OCI-LY7 (cell line): ENCODE measurements at regions of chr16 and their contacts with region 1.

Region 1: GRCh38 chr16:84593825-84594724 is 23.8 kb downstream of the COTL1 start:
- DNase-seq: peak; percentile 97
- H3K4me3 ChIP-seq: peak overlapping the region; percentile 71
- H3K27ac ChIP-seq: peak overlapping the region; percentile 97
- H3K4me1 ChIP-seq: peaks cover 69% of the 10 kb centered on the region
- CTCF ChIP-seq: no peak

Region 2: GRCh38 chr16:84511180-84511824 is 82.8 kb before region 1 on chr16:
- CTCF ChIA-PET with region 1: interaction called, 3 read pairs
- POLR2A ChIA-PET with region 1: interaction called, 26 read pairs
- intact Hi-C with region 1: loop called (anchors 1 kb)
- DNase-seq: peak; percentile 86
- H3K4me3 ChIP-seq: peak overlapping the region; percentile 50
- H3K27ac ChIP-seq: no peak overlapping the region
- H3K4me1 ChIP-seq: peaks cover 59% of the 10 kb centered on the region
- CTCF ChIP-seq: peak; percentile 98

Region 3: GRCh38 chr16:84836234-84836647 is 242.2 kb after region 1 on chr16:
- CTCF ChIA-PET with region 1: no interaction called
- POLR2A ChIA-PET with region 1: no interaction called
- intact Hi-C with region 1: no loop called
- DNase-seq: no peak
- H3K4me3 ChIP-seq: no peak overlapping the region
- H3K27ac ChIP-seq: no peak overlapping the region
- H3K4me1 ChIP-seq: no peaks in the 10 kb centered on the region
- CTCF ChIP-seq: no peak